Natural killer cell (primary cell): ENCODE measurements at regions of chr20 and their contacts with region 1.

Region 1: GRCh38 chr20:58907399-58908137 is 55.1 kb downstream of the GNAS start:
- DNase-seq: peak; percentile 64 to 86
- ATAC-seq: peak; percentile 86 to 89 (median 89)
- H3K4me3 ChIP-seq: peak overlapping the region; percentile 8
- H3K4me3 Mint-ChIP-seq: peak overlapping the region; percentile 88
- H3K27ac ChIP-seq: peak overlapping the region; percentile 80
- H3K27ac Mint-ChIP-seq: peak overlapping the region; percentile 89 to 96
- H3K4me1 ChIP-seq: peaks cover 29% of the 10 kb centered on the region
- H3K4me1 Mint-ChIP-seq: peaks cover 42 to 47% of the 10 kb centered on the region in 2 donors
- H3K27me3 ChIP-seq: no peaks in the 10 kb centered on the region
- H3K27me3 Mint-ChIP-seq: no peaks in the 10 kb centered on the region
- CTCF ChIP-seq: no peak

Region 2: DNA sequence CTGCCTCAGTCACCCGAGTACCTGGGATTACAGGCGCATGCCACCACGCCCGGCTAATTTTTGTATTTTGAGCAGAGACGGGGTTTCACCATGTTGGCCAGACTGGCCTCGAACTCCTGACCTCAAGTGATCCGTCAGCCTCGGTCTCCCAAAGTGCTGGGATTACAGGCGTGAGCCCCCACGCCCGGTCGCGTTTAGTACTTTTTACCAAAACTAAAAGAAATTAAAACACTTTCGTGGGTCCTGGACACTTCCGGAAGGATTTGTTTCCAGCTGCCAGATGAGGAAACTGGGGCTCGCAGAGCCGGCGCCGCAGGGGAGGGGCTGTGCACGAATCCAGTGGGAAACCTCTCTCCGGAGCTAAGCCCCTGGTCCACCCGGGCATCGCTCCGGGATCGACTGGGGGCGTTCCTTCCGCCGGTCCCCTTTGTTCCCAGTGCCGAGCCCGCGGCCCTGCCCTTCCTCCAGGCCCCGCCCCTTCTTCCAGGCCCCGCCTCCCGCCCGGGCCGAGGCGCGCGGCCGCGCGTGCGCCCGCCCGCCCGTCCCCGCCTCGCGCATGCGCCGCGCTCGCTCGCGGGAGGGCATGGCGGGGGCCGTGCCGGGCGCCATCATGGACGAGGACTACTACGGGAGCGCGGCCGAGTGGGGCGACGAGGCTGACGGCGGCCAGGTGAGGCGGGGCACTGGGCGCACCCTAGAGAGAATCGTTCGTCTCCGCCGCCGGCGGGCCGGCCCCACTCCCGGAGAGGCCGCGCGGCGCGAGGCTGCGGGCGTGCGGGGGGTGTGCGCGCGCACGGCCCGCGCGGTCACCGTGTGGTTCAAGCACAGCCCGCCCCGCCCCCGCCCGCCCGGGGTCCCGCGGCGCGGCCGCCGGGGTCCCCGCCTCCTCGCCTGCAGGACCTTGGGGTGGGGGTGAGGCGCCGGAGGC is 73.4 kb after region 1 on chr20 and contains the start of gene NELFCD:
- intact Hi-C with region 1: loop called (anchors 5 kb)
- DNase-seq: peak; percentile 87 to 95
- ATAC-seq: peak; percentile 86 to 94 (median 87)
- H3K4me3 ChIP-seq: peak within 1 kb of the TSS; percentile 89
- H3K4me3 Mint-ChIP-seq: peak within 1 kb of the TSS; percentile 77
- H3K27ac ChIP-seq: peak within 1 kb of the TSS; percentile 66
- H3K27ac Mint-ChIP-seq: peak within 1 kb of the TSS; percentile 70 to 87
- H3K4me1 ChIP-seq: peaks cover 33% of the 10 kb centered on the region
- H3K4me1 Mint-ChIP-seq: peaks cover 21 to 29% of the 10 kb centered on the region in 2 donors
- H3K27me3 ChIP-seq: no peaks in the 10 kb centered on the region
- H3K27me3 Mint-ChIP-seq: no peaks in the 10 kb centered on the region
- CTCF ChIP-seq: no peak
- total RNA-seq, gene NELFCD: 75.7 to 105 (median 92.6) TPM